Right cardiac atrium (tissue), 5 donors: ENCODE measurements at regions of chr12 and their contacts with region 1.

Region 1: GRCh38 chr12:52980693-52981423 is 25.4 kb upstream of the EIF4B start:
- DNase-seq: peak; percentile 90 to 95 (median 91)
- ATAC-seq: peak; percentile 90 to 91
- H3K4me3 ChIP-seq: no peak overlapping the region
- H3K27ac ChIP-seq: no peak overlapping the region
- H3K4me1 ChIP-seq: no peaks in the 10 kb centered on the region
- H3K27me3 ChIP-seq: no peaks in the 10 kb centered on the region

Region 2: DNA sequence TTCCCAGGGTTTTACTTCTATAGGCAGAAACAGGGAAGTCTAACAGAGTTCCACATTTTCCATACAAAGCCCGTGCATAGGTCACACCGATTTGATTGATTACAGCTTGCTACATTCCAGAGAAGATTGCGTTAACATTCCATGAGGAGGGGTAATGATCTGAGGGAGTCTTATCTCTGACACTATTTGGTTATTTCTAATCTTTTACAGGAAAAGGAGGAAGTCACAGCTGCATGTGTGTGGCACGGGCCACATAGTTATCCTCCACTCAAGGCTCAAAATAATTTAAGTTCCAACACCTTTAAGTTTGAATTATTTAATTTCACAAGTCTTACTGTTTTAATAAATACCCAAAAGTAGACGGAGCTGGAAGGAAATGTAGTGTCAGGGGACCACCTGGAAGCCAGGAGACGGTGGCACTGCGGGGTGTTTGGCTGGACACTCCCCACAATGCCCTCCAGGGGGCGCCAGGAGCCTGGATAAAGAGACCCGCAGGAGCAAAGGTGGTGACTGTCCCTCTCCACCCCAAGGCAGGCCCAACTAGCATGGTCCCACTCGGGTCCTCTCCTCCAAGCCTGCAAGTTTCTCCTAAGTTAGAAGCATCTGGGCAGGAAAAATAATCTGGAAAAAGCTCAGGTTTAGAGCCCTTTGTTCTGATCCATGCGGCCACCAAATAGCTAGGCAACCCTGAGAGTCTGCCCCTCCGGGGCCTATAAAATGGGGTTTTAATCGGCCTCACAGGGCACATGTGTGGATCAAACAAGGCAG is 96.1 kb before region 1 on chr12:
- intact Hi-C with region 1: loop called (anchors 1 to 2 kb)
- DNase-seq: peak; percentile 76 to 91 (median 90)
- ATAC-seq: peak; percentile 87 to 88
- H3K4me3 ChIP-seq: no peak overlapping the region
- H3K27ac ChIP-seq: no peak overlapping the region
- H3K4me1 ChIP-seq: no peaks in the 10 kb centered on the region
- H3K27me3 ChIP-seq: no peaks in the 10 kb centered on the region

Region 3: DNA sequence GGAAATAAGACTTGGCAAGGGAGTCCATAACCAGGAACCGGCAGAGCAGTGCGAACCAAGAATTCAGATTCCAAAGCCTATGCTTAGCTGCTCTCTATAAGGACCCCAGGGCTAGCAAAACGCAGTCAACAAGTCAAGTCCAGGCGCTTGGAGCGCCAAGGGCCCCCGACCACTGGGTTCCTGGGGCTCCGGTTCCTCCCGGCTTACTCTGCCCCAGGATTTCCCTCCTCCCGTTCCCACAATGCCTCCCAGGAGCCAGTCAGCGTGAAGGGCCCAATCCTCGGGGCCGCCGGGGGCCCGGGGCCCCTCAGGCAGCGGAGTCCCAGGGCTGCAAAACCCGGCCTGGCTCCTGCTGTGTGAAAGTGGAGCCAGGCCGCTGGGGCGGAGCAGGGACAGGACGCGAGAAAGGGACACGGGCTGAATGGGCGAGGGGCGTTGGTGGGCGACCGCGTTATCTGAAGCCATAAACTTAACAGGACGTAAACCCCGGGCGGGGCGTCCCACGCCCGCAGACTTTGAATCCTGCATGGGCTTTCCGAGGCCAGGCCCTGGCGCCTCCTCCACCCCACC is 77.5 kb before region 1 on chr12:
- intact Hi-C with region 1: loop called in 1 of 4 experiments (anchors 5 kb)
- DNase-seq: peak; percentile 79 to 92 (median 90)
- ATAC-seq: peak; percentile 88 to 89
- H3K4me3 ChIP-seq: peak overlapping the region; percentile 56
- H3K27ac ChIP-seq: peak overlapping the region; percentile 2
- H3K4me1 ChIP-seq: no peaks in the 10 kb centered on the region
- H3K27me3 ChIP-seq: no peaks in the 10 kb centered on the region

Region 4: DNA sequence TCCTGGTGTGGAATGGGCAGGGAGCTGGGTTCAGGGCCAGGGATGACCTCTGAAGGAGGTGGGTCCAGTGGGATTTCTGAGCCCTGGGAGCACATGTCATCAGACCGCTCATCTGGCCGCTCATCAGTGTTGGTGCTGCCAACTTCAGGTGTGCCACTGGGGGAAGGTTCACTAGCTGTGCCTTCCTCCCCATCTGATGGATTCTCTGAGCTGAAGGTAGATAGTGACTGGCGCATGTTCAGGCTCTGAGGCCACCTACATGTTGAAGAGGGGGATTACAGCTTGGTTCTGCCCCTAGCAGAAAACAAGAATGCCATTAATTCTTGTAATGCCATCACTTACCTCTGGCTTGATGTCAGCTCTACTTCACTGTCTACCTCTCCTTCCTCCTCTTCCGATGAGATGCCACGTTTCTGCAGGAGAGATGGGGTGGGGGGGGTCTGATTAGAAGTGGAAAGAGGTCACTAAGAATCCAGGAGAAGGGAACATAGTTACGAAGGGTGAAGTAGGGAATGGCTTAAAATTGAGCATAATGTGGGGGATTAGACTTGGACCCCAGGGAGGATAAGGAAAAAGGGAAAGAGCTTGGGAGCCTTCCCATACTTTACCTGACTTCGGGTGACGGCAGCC is 501.2 kb after region 1 on chr12:
- intact Hi-C with region 1: no loop called
- DNase-seq: no peak
- ATAC-seq: no peak
- H3K4me3 ChIP-seq: no peak overlapping the region
- H3K27ac ChIP-seq: no peak overlapping the region
- H3K4me1 ChIP-seq: no peaks in the 10 kb centered on the region
- H3K27me3 ChIP-seq: no peaks in the 10 kb centered on the region